ENCODE measurements at regions of chr10 and their contacts with region 1.

Region 1: DNA sequence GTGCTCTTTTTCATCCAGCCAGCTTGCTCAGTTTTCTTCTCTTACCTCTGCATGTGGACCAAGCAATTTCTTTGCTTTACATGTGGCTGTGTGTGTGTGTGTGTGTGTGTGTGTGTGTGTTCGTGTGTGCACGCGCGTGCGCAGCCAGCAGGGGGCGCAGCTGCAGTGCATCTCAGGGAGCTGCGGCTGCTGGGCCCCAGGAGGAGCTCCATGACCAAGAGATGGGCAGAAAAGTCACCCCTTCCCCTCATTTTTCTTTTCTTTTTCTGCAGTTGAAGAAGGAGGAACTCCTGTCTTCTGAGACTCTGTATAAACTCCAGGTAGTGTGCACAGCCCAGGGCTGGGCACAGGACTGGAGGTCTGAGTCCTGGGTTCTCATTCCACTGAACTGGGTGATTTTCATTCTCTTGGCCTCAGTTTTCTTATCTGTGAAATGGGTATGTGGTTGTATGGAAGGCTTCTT is 41.8 kb downstream of the BLNK start:
- DNase-seq: peak; percentile 58 to 75
- H3K4me3 ChIP-seq: no peak overlapping the region
- H3K27ac ChIP-seq: no peak overlapping the region
- H3K4me1 ChIP-seq: no peaks in the 10 kb centered on the region
- H3K27me3 ChIP-seq: no peaks in the 10 kb centered on the region
- CTCF ChIP-seq: peak; percentile 72 to 98 (median 88)
- POLR2A ChIP-seq: no peak

Region 2: GRCh38 chr10:95796504-95796903 is 433.1 kb before region 1 on chr10:
- intact Hi-C with region 1: loop called (anchors 5 kb)
- DNase-seq: no peak
- H3K4me3 ChIP-seq: no peak overlapping the region
- H3K27ac ChIP-seq: no peak overlapping the region
- H3K4me1 ChIP-seq: no peaks in the 10 kb centered on the region
- H3K27me3 ChIP-seq: no peaks in the 10 kb centered on the region
- CTCF ChIP-seq: no peak
- POLR2A ChIP-seq: no peak

Region 3: GRCh38 chr10:96292971-96293920 is 63.6 kb after region 1 on chr10:
- intact Hi-C with region 1: loop called (anchors 10 kb)
- DNase-seq: no peak
- H3K4me3 ChIP-seq: no peak overlapping the region
- H3K27ac ChIP-seq: no peak overlapping the region
- H3K4me1 ChIP-seq: no peaks in the 10 kb centered on the region
- H3K27me3 ChIP-seq: peaks cover 0 to 4% of the 10 kb centered on the region in 2 donors
- CTCF ChIP-seq: peak; percentile 33 to 61 (median 57)
- POLR2A ChIP-seq: no peak